SK-N-SH (cell line): ENCODE measurements at regions of chr9 and their contacts with region 1.

Region 1: GRCh38 chr9:126490871-126491567 is 122.7 kb upstream of the LMX1B start:
- DNase-seq: peak; percentile 69
- H3K4me3 ChIP-seq: no peak overlapping the region
- H3K27ac ChIP-seq: no peak overlapping the region
- H3K4me1 ChIP-seq: no peaks in the 10 kb centered on the region
- H3K27me3 ChIP-seq: no peaks in the 10 kb centered on the region
- CTCF ChIP-seq: peak; percentile 96
- EP300 ChIP-seq: no peak
- RAD21 ChIP-seq: peak; percentile 93

Region 2: DNA sequence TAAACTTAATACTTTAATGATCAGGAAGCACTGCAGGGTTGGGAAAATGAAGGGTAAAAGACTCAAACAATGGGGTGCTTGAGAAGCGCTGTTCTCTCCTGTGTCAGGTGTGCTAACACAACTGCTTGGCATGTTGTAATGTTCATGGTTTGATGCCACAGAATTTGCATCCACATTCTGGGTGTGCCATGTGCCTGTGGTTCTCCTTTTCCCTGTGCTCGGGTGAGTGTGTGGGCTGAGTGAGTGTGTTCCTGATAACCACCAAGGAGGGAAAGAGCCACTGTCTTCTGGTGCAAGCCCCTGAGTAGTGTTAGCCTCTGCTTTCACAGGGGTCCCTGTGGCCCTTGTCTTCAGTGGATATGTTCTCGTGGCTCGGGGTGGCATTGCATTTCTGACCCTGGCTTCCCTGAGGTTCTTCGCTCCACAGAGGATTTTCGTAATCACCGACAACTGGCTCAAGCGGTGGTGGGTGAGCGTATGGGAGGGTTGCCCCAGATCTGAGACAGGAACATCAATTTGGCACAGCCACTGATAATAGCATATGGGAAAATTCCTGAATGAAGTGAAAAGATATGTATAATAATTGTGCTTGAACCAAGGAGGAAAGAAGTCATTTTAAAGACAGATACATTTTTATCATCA is 62.4 kb before region 1 on chr9:
- CTCF ChIA-PET with region 1: interaction called, 22 read pairs
- POLR2A ChIA-PET with region 1: no interaction called
- DNase-seq: no peak
- H3K4me3 ChIP-seq: no peak overlapping the region
- H3K27ac ChIP-seq: no peak overlapping the region
- H3K4me1 ChIP-seq: peaks cover 0 to 10% of the 10 kb centered on the region in 2 experiments; a peak in 2 of 4 replicates
- H3K27me3 ChIP-seq: no peaks in the 10 kb centered on the region
- CTCF ChIP-seq: no peak
- EP300 ChIP-seq: no peak
- RAD21 ChIP-seq: no peak

Region 3: DNA sequence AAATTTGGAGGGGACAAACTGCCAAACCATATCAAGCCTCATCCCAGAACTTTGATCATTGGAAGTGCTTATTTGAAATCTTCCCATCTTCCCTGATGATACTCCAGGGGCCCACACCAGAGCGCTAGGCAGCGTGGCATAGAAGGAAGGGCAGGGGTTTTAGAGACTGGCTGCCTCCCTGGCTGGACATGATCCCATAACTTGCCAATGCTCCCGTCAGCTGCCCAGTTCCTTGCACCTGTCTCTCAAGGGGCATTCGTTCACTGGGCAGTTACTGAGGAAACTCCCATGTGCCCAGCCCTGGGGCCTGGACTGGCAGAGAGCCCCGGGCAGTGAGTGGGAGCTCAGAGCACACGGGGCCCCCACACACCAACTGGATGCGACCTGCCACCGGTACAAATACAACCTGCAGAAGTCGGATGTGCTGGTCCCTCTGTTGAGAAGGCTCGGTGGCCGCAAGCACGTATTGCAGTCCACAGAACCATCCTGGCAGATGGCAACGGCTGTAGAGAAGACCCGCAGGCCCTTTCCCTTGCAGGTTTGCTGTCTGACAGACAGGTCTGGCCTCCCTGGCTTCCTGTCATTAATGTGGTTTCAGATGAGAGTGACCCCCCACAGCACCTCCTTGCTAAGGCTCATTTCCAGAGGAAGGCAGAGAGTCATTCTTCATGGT is 42.0 kb before region 1 on chr9:
- CTCF ChIA-PET with region 1: interaction called, 10 read pairs
- POLR2A ChIA-PET with region 1: no interaction called
- DNase-seq: no peak
- H3K4me3 ChIP-seq: no peak overlapping the region
- H3K27ac ChIP-seq: no peak overlapping the region
- H3K4me1 ChIP-seq: peaks cover 0 to 17% of the 10 kb centered on the region in 2 experiments; a peak in 1 of 4 replicates
- H3K27me3 ChIP-seq: no peaks in the 10 kb centered on the region
- CTCF ChIP-seq: no peak
- EP300 ChIP-seq: no peak
- RAD21 ChIP-seq: no peak

Region 4: DNA sequence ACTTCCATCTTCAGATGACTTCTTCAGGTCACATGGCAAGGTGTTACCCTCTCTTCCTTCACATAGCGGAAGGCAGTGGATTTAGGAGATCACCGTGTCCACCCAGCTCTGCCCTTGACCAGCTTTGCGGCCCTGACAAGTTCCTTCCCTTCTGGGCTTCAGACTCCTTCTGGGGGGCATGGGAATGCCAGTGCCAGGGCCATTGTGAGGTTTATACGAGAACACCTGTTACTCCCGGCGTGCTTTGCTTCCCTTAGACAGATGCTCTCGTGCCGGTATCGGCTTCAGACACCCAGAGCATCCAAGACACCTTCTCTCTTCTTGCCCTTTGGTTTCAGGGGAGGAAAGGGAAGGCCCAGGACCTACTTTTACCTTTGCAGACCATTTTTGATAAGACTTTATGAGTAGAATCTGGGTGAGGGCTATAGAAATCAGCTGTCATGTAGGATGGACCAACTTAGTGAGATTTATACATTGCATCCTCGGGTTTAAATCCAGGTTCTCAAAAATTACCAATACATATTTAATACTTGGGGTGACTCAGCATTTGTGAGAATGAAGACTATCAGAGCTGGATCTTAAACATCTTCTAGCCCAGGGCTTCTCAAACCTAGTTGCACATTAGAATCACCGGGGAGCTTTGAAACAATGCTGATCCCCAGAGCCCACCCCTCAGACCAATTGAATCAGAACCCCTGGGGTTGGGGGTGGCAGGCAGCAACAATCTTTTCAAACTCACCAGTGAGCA is 26.2 kb before region 1 on chr9:
- CTCF ChIA-PET with region 1: interaction called, 29 read pairs
- POLR2A ChIA-PET with region 1: no interaction called
- DNase-seq: no peak
- H3K4me3 ChIP-seq: no peak overlapping the region
- H3K27ac ChIP-seq: no peak overlapping the region
- H3K4me1 ChIP-seq: peaks cover 0 to 7% of the 10 kb centered on the region in 2 experiments; a peak in 1 of 4 replicates
- H3K27me3 ChIP-seq: no peaks in the 10 kb centered on the region
- CTCF ChIP-seq: no peak
- EP300 ChIP-seq: no peak
- RAD21 ChIP-seq: no peak

Region 5: DNA sequence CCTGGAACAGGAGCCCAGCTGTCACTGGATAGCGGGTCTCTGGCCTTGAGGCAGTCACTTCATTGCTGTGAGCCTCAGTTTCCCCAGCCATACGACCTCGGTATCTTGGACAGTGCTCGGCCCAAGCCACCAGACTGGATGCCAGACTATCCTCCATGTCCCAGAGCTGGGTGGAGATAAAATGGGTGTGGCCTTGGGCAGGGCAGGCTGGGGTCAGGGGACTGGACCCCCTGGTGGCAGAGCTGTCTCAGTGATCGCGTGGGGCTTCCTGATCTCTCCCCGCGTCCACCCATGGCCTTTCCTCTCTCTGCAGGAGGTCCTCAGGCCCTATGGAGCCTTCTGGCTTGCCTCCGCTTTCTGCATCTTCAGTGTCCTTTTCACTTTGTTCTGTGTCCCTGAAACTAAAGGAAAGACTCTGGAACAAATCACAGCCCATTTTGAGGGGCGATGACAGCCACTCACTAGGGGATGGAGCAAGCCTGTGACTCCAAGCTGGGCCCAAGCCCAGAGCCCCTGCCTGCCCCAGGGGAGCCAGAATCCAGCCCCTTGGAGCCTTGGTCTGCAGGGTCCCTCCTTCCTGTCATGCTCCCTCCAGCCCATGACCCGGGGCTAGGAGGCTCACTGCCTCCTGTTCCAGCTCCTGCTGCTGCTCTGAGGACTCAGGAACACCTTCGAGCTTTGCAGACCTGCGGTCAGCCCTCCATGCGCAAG is 915.9 kb after region 1 on chr9:
- CTCF ChIA-PET with region 1: no interaction called
- POLR2A ChIA-PET with region 1: no interaction called
- DNase-seq: no peak
- H3K4me3 ChIP-seq: no peak overlapping the region
- H3K27ac ChIP-seq: no peak overlapping the region; a peak in 1 of 4 replicates
- H3K4me1 ChIP-seq: peaks cover 0 to 7% of the 10 kb centered on the region in 2 experiments; a peak in 1 of 4 replicates
- H3K27me3 ChIP-seq: no peaks in the 10 kb centered on the region
- CTCF ChIP-seq: no peak
- EP300 ChIP-seq: no peak
- RAD21 ChIP-seq: no peak